Activated B cell treated with CpG ODN at 0.5 μM for 24 hours (primary cell): ENCODE measurements at regions of chr5 and their contacts with region 1.

Region 1: GRCh38 chr5:34517249-34517648 is 138.9 kb upstream of the RAI14 start:
- DNase-seq: no peak
- ATAC-seq: no peak
- H3K4me3 Mint-ChIP-seq: no peak overlapping the region
- H3K27ac Mint-ChIP-seq: no peak overlapping the region
- H3K4me1 Mint-ChIP-seq: no peaks in the 10 kb centered on the region
- H3K27me3 Mint-ChIP-seq: no peaks in the 10 kb centered on the region
- CTCF ChIP-seq: no peak

Region 2: GRCh38 chr5:34991486-34992238 is 474.4 kb after region 1 on chr5:
- CTCF ChIA-PET with region 1: no interaction called
- POLR2A ChIA-PET with region 1: no interaction called
- intact Hi-C with region 1: loop called (anchors 5 kb)
- DNase-seq: no peak
- ATAC-seq: no peak
- H3K4me3 Mint-ChIP-seq: no peak overlapping the region
- H3K27ac Mint-ChIP-seq: no peak overlapping the region
- H3K4me1 Mint-ChIP-seq: no peaks in the 10 kb centered on the region
- H3K27me3 Mint-ChIP-seq: peaks cover 24% of the 10 kb centered on the region
- CTCF ChIP-seq: no peak